ENCODE measurements at regions of chr3 and their contacts with region 1.

Region 1: GRCh38 chr3:190224863-190225692 is 97.2 kb downstream of the CLDN1 start:
- DNase-seq: peak; percentile 58
- H3K4me3 ChIP-seq: no peak overlapping the region
- H3K27ac ChIP-seq: no peak overlapping the region
- H3K4me1 ChIP-seq: peaks cover 10% of the 10 kb centered on the region
- H3K27me3 ChIP-seq: no peaks in the 10 kb centered on the region
- CTCF ChIP-seq: peak; percentile 20 to 24
- POLR2A ChIP-seq: no peak

Region 2: GRCh38 chr3:189908646-189909045 is 316.4 kb before region 1 on chr3:
- CTCF ChIA-PET with region 1: no interaction called
- POLR2A ChIA-PET with region 1: no interaction called
- dilution Hi-C with region 1: no loop called
- intact Hi-C with region 1: no loop called
- DNase-seq: peak; percentile 87
- H3K4me3 ChIP-seq: no peak overlapping the region
- H3K27ac ChIP-seq: peak overlapping the region; percentile 90
- H3K4me1 ChIP-seq: peaks cover 31% of the 10 kb centered on the region
- H3K27me3 ChIP-seq: no peaks in the 10 kb centered on the region
- CTCF ChIP-seq: no peak
- POLR2A ChIP-seq: peak; percentile 9

Region 3: GRCh38 chr3:189961525-189962161 is 263.4 kb before region 1 on chr3:
- CTCF ChIA-PET with region 1: interaction called, 17 read pairs
- POLR2A ChIA-PET with region 1: no interaction called
- dilution Hi-C with region 1: loop called (anchors 25 kb)
- intact Hi-C with region 1: no loop called
- DNase-seq: peak; percentile 89
- H3K4me3 ChIP-seq: no peak overlapping the region
- H3K27ac ChIP-seq: no peak overlapping the region
- H3K4me1 ChIP-seq: no peaks in the 10 kb centered on the region
- H3K27me3 ChIP-seq: no peaks in the 10 kb centered on the region
- CTCF ChIP-seq: peak; percentile 77 to 90
- POLR2A ChIP-seq: no peak

Region 4: GRCh38 chr3:190301591-190301990 is 76.5 kb after region 1 on chr3:
- CTCF ChIA-PET with region 1: interaction called, 14 read pairs
- POLR2A ChIA-PET with region 1: no interaction called
- dilution Hi-C with region 1: no loop called
- intact Hi-C with region 1: loop called (anchors 5 kb)
- DNase-seq: peak; percentile 24
- H3K4me3 ChIP-seq: no peak overlapping the region
- H3K27ac ChIP-seq: no peak overlapping the region
- H3K4me1 ChIP-seq: peaks cover 8% of the 10 kb centered on the region
- H3K27me3 ChIP-seq: no peaks in the 10 kb centered on the region
- CTCF ChIP-seq: no peak
- POLR2A ChIP-seq: no peak

Measured in endothelial cell of umbilical vein (primary cell).